Heart left ventricle (tissue), 16 donors: ENCODE measurements at regions of chr18 and their contacts with region 1.

Region 1: DNA sequence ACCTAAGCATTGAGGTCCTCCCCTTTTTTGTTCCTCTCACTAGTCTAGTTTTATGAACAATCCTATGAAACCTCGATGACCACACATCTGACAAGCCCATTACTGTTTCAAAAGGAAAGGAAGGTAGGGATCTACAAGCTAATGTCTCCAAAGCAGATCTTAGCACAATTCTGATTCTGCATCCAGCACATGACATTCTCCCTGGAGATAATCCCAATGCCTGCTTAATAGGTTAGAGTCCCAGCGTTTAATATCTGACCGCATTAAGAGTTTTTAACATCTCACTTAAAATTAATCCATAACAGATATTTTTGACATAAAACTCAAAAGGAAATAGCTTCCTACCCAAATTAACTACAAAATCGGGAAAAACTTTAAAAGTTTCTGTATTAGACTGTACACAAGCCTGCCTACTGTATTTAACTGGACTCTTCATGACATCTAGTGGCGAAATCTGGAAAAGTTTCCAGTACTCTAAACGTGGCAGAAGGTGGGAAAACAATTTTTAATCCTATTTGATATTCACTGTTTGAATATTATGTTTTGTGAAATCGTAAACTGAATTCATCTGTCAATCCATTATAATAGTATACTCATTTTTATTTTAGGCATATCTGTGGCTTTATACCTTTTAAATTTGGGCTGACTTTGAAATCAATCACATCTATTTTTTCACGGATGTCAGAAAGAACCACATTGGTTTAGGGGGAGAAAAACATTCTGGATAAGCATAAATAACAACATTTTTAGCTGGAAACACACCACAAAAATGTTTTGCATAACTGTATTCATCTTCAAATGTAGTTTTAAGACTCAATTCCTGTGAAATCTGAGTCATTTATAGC is 62.4 kb downstream of the TXNL1 start:
- DNase-seq: peak in 1 of 5 donors; percentile 45
- ATAC-seq: peak; percentile 72 to 90 (median 80)
- H3K4me3 ChIP-seq: peak overlapping the region in 2 of 12 donors; percentile 6 to 26
- H3K27ac ChIP-seq: peak overlapping the region in 11 of 12 donors; percentile 39 to 84 (median 73)
- H3K4me1 ChIP-seq: peaks cover 10 to 38% (median 29%) of the 10 kb centered on the region in 12 donors
- H3K27me3 ChIP-seq: no peaks in the 10 kb centered on the region
- CTCF ChIP-seq: peak; percentile 55 to 88 (median 77)
- POLR2A ChIP-seq: no peak

Region 2: GRCh38 chr18:54679318-54680149 is 1896.5 kb before region 1 on chr18:
- intact Hi-C with region 1: loop called in 1 of 10 experiments (anchors 10 kb)
- DNase-seq: no peak
- ATAC-seq: peak in 3 of 4 donors; percentile 44 to 60 (median 53)
- H3K4me3 ChIP-seq: no peak overlapping the region
- H3K27ac ChIP-seq: no peak overlapping the region
- H3K4me1 ChIP-seq: no peaks in the 10 kb centered on the region
- H3K27me3 ChIP-seq: no peaks in the 10 kb centered on the region
- CTCF ChIP-seq: peak; percentile 11 to 56 (median 38)
- POLR2A ChIP-seq: no peak

Region 3: GRCh38 chr18:55322178-55322735 is 1253.8 kb before region 1 on chr18:
- intact Hi-C with region 1: loop called in 1 of 10 experiments (anchors 10 kb)
- DNase-seq: peak; percentile 87 to 94 (median 89)
- ATAC-seq: peak; percentile 76 to 90 (median 87)
- H3K4me3 ChIP-seq: peak overlapping the region; percentile 49 to 79 (median 66)
- H3K27ac ChIP-seq: peak overlapping the region; percentile 83 to 99 (median 94)
- H3K4me1 ChIP-seq: peaks cover 0 to 44% (median 31%) of the 10 kb centered on the region in 12 donors
- H3K27me3 ChIP-seq: no peaks in the 10 kb centered on the region
- CTCF ChIP-seq: peak in 7 of 12 donors; percentile 12 to 48 (median 33)
- POLR2A ChIP-seq: peak in 1 of 2 donors; percentile 75

Region 4: DNA sequence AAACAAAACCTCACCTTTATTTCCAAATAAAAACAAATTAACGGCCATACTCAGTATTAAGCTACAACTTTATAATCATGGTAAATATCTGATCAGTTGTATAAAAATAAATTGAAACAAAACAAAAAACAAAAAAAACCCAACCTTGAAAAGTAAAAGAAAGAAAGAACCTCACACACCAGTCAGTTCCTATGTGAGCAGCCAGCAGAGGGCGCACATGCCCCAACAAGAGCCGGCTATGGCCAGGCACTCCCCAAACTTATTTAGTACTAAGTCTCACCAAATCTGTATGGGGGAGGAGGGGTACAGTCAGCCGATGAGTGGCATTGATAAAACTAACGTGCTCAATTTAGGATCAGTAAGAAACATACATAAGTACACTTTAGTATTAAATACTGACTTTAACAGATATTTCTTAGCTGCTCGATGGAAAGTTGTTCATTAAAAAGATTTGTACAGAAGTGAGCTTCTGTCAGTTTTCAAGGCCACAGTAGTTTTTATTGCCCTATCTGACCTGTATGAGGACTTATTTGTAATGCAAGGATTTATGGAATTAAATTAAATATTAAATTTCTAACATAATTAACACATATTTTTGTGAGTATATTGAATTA is 1160.7 kb before region 1 on chr18:
- intact Hi-C with region 1: loop called (anchors 1 to 5 kb)
- DNase-seq: peak; percentile 85 to 92 (median 88)
- ATAC-seq: peak; percentile 85 to 93 (median 88)
- H3K4me3 ChIP-seq: no peak overlapping the region
- H3K27ac ChIP-seq: peak overlapping the region in 7 of 12 donors; percentile 1 to 58 (median 21)
- H3K4me1 ChIP-seq: peaks cover 0 to 67% (median 27%) of the 10 kb centered on the region in 12 donors
- H3K27me3 ChIP-seq: no peaks in the 10 kb centered on the region
- CTCF ChIP-seq: peak; percentile 83 to 97 (median 94)
- POLR2A ChIP-seq: no peak

Region 5: DNA sequence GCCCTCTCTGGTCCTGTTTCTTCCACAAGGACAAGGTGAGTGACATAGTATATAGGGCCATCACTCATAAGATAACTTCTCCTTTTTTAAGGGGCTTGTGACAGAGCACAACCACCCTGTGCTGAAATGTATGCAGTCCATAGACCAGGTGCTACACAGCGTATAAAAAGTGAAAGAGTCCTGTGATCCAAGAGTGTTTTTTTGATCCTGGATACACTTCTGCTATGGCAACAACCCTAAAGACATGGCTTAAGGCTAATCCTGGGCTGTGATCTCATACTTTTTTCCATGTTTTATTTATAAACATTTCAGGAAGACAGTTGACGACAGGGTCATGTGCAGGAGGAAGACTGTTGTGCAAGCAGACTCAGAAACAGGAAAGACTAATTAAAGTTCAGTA is 587.5 kb before region 1 on chr18:
- intact Hi-C with region 1: loop called in 2 of 10 experiments (anchors 10 kb)
- DNase-seq: peak in 4 of 5 donors; percentile 36 to 70 (median 46)
- ATAC-seq: peak; percentile 94 to 98 (median 96)
- H3K4me3 ChIP-seq: no peak overlapping the region
- H3K27ac ChIP-seq: peak overlapping the region; percentile 11 to 90 (median 71)
- H3K4me1 ChIP-seq: peaks cover 0 to 14% (median 2%) of the 10 kb centered on the region in 12 donors
- H3K27me3 ChIP-seq: no peaks in the 10 kb centered on the region
- CTCF ChIP-seq: no peak
- POLR2A ChIP-seq: no peak

Region 6: DNA sequence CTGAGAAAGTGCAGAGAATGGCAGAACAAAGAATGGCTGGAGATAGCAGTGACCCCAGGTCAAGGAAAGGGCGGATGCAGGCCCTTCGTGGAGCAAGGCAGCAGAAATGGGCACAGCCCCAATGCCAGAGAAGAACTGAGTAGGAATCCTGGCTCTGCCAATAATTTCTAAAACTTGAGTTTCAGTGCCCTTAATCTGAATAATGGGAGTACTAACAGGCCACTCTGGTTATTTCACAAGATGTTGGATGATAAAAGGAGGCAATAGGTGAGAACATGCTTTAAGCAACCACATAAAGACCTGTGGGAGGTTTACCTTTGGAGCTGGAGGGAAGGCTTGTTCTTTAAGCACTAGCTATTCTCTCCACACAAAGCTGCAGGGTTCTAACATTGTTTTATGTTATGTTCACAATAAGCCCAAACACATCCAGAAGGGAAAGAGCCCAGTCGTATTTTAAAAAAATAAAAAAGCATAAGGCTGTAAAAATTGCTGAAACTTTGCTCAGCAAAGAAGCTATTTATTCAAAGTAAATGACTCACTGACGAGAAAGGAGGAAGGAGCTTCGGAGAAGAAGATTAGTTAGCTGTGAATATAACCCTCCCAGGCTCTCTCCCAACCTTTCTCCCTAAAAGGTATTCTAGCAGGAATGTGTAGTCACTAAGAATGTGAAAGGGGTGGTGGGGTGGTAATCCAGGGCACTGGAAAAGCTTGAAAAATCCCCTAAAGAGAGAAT is 407.8 kb before region 1 on chr18:
- intact Hi-C with region 1: loop called in 1 of 10 experiments (anchors 10 kb)
- DNase-seq: no peak
- ATAC-seq: peak in 2 of 4 donors; percentile 34 to 50
- H3K4me3 ChIP-seq: no peak overlapping the region
- H3K27ac ChIP-seq: peak overlapping the region in 7 of 12 donors; percentile 0 to 59 (median 35)
- H3K4me1 ChIP-seq: peaks cover 0 to 22% (median 7%) of the 10 kb centered on the region in 12 donors
- H3K27me3 ChIP-seq: no peaks in the 10 kb centered on the region
- CTCF ChIP-seq: no peak
- POLR2A ChIP-seq: no peak

Region 7: DNA sequence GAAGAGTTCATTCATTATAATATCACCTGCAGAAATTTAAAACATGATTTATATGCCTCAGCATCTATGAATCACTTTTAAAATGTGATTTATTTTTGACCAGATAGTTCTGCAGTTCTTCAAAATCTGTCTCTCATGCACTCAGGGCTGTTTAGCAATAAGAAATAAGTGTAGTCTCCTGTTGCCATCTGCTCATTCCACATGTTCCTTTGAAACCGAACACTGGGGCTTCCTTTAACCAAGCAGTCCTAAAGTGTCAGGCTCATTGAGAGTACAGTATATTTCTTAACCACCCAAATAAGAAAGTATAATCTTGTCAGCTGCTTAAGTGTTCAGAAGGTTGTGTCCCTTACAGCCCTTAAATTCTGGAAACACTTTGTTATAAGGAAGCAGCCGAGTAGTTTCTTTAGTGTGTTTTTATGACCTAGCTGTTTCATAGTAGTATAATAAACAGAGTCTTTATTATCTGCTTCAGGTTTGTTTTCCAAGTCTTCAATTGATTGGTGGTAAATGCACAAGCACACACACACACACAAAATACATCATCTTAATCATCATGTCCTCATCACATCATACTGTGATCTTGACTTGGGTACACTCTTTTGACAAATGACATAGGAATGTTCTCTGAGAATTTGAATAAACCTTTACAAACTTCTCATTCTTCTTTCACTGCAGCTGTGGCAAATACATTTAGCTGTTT is 85.5 kb after region 1 on chr18:
- intact Hi-C with region 1: no loop called
- DNase-seq: no peak
- ATAC-seq: peak in 1 of 4 donors; percentile 27
- H3K4me3 ChIP-seq: no peak overlapping the region
- H3K27ac ChIP-seq: no peak overlapping the region
- H3K4me1 ChIP-seq: peaks cover 0 to 28% (median 6%) of the 10 kb centered on the region in 12 donors
- H3K27me3 ChIP-seq: no peaks in the 10 kb centered on the region
- CTCF ChIP-seq: no peak
- POLR2A ChIP-seq: no peak